ENCODE measurements at regions of chr3 and their contacts with region 1.

Region 1: DNA sequence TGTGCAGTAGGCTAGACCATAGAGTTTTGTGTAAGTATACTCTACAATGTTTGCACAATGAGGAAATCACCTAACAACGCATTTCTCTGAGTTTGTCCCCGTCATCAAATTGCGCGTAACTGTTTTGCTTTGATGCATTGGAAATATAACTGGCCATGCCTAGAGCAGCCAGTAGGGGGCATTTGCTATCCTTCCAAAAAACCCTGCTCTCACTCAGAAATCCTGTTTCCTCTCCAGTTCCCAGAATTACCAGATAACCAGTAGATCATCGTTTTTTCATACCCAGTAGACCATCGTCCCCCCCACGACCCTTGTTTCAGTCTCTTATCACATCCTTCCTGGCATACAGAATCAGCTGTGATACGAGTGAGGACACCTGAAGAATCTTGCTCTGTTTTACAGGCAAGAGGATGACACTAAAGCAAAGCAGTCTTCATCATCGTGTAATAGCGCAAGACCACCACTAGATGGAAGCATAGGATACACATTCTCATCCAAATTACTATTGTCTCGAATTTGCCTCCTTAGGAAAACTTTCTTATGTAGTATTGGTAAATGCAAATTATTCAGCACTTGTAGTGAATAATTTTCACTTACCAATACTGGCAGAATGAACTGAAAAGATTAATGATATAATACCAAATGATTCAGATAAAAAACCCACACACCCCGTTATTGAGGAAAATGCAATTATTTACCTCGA is 4.4 kb upstream of the GABRR3 start:
- DNase-seq: no peak
- ATAC-seq: peak; percentile 96
- H3K4me3 ChIP-seq: peak overlapping the region; percentile 39
- H3K27ac ChIP-seq: no peak overlapping the region
- H3K4me1 ChIP-seq: no peaks in the 10 kb centered on the region
- H3K27me3 ChIP-seq: peaks cover 5% of the 10 kb centered on the region
- CTCF ChIP-seq: peak; percentile 84

Region 2: DNA sequence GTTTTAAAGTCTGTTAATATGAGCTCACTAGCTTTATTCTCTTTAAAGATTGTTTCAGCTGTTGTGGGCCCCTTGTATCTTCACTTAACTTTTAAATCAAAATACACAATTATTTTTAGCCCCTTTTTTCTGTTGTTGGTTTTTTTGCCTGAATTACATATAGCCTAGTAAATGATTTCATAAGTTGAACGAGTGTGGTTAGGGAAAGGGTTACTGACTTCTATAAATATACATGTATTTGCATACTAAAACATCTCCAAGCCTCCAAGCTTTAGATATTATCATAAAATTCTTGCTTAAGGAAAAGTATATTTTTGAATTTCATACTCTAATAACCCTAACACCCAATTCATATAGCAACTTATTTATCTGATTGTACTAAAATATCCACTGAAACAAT is 348.1 kb before region 1 on chr3:
- intact Hi-C with region 1: no loop called
- DNase-seq: no peak
- ATAC-seq: no peak
- H3K4me3 ChIP-seq: no peak overlapping the region
- H3K27ac ChIP-seq: no peak overlapping the region
- H3K4me1 ChIP-seq: no peaks in the 10 kb centered on the region
- H3K27me3 ChIP-seq: no peaks in the 10 kb centered on the region
- CTCF ChIP-seq: no peak

Region 3: GRCh38 chr3:97871801-97872524 is 167.5 kb before region 1 on chr3:
- intact Hi-C with region 1: no loop called
- DNase-seq: no peak
- ATAC-seq: peak in 1 of 2 donors; percentile 47
- H3K4me3 ChIP-seq: no peak overlapping the region
- H3K27ac ChIP-seq: no peak overlapping the region
- H3K4me1 ChIP-seq: no peaks in the 10 kb centered on the region
- H3K27me3 ChIP-seq: no peaks in the 10 kb centered on the region
- CTCF ChIP-seq: no peak

Region 4: DNA sequence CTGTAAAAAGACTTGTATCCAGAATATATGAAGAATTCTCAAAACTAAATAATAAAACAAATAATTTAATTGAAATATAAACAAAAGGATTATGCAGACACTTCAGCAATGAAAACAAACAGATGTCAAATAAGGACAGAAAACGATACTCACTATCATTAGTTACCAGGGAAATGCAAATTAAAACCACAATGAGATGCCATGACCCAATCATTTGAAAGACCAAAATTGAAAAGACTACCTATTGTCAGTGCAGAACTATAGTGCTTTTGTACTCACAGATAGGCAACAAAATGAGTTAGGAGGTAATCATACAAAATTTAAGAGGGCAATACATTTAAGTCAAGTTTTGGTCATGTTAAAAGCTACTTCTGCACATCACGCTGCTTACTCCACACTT is 282.6 kb after region 1 on chr3:
- intact Hi-C with region 1: loop called (anchors 10 kb)
- DNase-seq: no peak
- ATAC-seq: no peak
- H3K4me3 ChIP-seq: no peak overlapping the region
- H3K27ac ChIP-seq: no peak overlapping the region
- H3K4me1 ChIP-seq: no peaks in the 10 kb centered on the region
- H3K27me3 ChIP-seq: no peaks in the 10 kb centered on the region
- CTCF ChIP-seq: no peak